Left ventricle myocardium inferior (tissue), 1 donor: ENCODE measurements at regions of chr5 and their contacts with region 1.

Region 1: GRCh38 chr5:126354012-126354857 is 69.0 kb upstream of the GRAMD2B start:
- DNase-seq: no peak
- H3K4me3 ChIP-seq: peak overlapping the region; percentile 44
- H3K27ac ChIP-seq: peak overlapping the region; percentile 61
- H3K4me1 ChIP-seq: peaks cover 7% of the 10 kb centered on the region
- H3K27me3 ChIP-seq: no peaks in the 10 kb centered on the region
- CTCF ChIP-seq: peak; percentile 71

Region 2: DNA sequence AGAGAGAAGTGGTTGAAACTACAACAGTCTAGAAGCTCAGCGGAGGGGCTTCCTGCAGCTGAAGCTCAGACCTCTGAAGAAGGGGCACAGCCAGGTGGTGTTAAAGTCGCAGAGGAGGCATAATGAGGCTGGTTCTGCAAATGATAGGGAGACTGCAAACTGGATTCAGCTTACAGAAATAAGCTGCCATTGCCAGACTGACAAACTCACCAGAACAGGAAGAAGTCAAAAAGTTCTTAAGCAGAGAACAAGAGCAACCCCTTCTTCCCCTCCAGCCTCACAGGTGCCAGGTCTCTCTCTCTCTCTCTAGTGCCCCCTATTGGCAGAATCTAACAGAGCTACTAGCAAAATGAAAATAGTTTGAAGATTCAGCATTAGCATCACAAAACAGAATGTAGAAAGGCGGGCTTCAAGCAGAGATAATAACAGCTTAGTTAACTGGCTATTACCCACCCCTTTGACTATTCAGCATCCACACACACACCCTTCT is 145.7 kb after region 1 on chr5:
- intact Hi-C with region 1: no loop called
- DNase-seq: no peak
- H3K4me3 ChIP-seq: no peak overlapping the region
- H3K27ac ChIP-seq: no peak overlapping the region
- H3K4me1 ChIP-seq: peaks cover 24% of the 10 kb centered on the region
- H3K27me3 ChIP-seq: no peaks in the 10 kb centered on the region
- CTCF ChIP-seq: peak; percentile 63

Region 3: DNA sequence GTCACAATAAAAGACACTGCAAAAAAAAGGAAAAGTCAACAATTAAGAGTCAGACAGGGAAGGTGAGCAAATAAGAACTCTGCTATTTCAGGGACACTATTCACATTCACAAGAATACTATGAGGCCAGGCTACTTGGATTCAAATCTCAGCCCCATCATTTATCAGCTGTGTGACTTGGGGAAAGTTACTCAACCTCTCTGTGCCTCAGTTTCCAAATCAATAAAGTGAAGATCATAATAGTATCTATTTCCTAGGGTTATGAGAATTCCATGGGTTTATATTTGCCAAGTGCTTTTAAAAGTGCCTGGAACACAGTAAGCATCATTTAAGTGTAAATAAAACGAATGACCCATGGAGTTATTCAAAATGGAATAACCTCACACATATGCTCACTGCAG is 184.3 kb after region 1 on chr5:
- intact Hi-C with region 1: loop called (anchors 2 kb)
- DNase-seq: no peak
- H3K4me3 ChIP-seq: no peak overlapping the region
- H3K27ac ChIP-seq: peak overlapping the region; percentile 57
- H3K4me1 ChIP-seq: peaks cover 21% of the 10 kb centered on the region
- H3K27me3 ChIP-seq: no peaks in the 10 kb centered on the region
- CTCF ChIP-seq: no peak